Naive thymus-derived CD8-positive, alpha-beta T cell (primary cell): ENCODE measurements at regions of chr7 and their contacts with region 1.

Region 1: DNA sequence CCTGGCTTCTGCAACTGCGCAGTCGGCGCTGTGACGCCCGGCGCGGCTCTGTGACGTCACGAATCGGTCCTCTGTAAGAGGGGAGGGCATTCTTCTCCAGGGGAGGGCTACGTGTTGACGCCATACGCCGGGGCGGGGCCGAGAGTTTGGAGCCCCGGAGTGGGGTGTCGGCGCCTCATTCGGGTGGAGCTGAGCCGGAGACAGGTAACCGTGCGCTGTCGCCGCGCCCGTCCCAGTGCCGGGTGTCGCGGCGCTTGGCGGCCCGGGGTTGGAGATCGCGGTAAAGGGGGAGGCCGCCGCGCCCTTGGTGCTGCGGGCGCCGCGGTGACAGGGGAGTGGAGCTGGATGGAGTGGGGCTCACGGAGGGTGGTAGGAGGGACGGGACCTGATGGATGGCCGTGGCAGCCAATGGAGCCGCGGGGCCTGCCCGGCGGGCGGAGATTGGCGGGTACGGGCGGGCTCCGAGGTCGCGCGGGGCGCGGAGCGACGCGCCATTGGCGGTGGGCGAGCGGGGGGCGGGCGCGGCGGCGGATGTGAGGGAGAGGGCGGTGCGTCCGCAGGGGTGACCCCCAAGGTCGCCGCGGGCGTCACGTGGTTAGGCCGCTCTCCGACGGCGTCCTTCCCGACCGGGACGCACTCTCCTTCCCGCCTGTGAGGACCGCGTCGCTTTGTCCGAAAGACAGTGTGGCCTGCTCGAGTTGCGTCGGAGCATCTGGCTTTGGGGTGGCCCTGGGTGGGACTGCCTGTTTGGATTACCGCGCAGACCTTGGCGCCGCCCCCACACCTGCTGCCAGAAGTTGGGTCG is at the start of gene OGDH:
- DNase-seq: peak; percentile 97 to 100 (median 99)
- ATAC-seq: peak; percentile 94 to 95
- H3K4me3 Mint-ChIP-seq: peak within 1 kb of the TSS; percentile 92 to 100 (median 98)
- H3K27ac Mint-ChIP-seq: peak within 1 kb of the TSS; percentile 96 to 100 (median 99)
- H3K4me1 Mint-ChIP-seq: peaks cover 11 to 52% (median 41%) of the 10 kb centered on the region in 4 donors
- H3K27me3 Mint-ChIP-seq: peaks cover 0 to 5% (median 0%) of the 10 kb centered on the region in 5 donors
- polyA plus RNA-seq, gene OGDH: 23.9 to 30.6 (median 25.6) TPM

Region 2: DNA sequence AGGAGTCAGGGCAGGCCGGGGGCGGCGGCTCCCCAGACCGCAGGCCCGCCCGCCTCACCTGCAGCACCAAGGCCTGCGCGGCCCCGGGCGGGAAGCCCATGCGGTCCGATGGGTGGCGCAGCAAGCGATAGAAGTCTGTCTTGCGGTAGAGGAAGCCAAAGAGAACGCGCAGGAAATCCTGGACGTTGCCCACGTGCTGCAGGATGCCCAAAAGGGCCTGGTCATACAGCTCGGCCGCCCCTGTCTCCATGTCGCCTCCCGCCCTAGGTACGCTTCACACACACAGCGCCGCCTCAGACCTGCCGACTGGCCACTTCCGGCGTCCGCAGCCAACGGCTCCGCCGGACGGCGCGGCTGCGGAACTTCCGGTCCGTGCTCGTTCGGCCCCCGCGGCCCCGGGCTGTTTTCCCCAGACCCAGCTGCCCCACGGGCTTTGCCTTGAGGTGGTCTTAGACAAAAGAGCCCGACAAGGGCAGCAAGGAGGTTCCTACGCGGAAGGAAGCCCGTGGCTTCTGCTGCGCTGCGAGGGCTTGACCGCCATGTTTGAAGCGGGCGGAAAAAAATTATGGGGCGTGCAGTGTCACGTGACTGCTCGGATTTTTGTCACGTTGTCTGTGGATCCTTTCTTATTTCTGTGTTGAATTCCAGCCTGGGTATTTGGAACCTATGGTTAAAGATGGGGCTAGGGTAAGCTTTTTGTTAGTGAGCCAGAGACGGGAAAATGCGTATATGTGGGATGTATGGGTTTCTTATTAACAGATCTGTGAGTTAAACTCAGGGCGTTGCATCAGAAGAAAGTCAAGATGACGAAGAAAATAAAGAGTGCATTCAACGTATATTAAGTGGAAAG is 116.1 kb before region 1 on chr7 and contains the start of gene NUDCD3:
- POLR2A ChIA-PET with region 1: interaction called, 12 read pairs
- DNase-seq: peak; percentile 57 to 89 (median 82)
- ATAC-seq: peak; percentile 80 to 81
- H3K4me3 Mint-ChIP-seq: peak within 1 kb of the TSS; percentile 83 to 99 (median 94)
- H3K27ac Mint-ChIP-seq: peak within 1 kb of the TSS; percentile 89 to 100 (median 97)
- H3K4me1 Mint-ChIP-seq: peaks cover 30 to 51% (median 48%) of the 10 kb centered on the region in 4 donors
- H3K27me3 Mint-ChIP-seq: peaks cover 0 to 5% (median 2%) of the 10 kb centered on the region in 5 donors
- polyA plus RNA-seq, gene NUDCD3: 54.6 to 69.4 (median 59.6) TPM

Region 3: GRCh38 chr7:44581879-44582603 is 24.6 kb before region 1 on chr7 and contains the start of gene TMED4:
- POLR2A ChIA-PET with region 1: interaction called, 45 read pairs
- DNase-seq: peak; percentile 99 to 100 (median 100)
- ATAC-seq: peak; percentile 84 to 85
- H3K4me3 Mint-ChIP-seq: peak within 1 kb of the TSS; percentile 87 to 93 (median 91)
- H3K27ac Mint-ChIP-seq: peak within 1 kb of the TSS; percentile 91 to 99 (median 98)
- H3K4me1 Mint-ChIP-seq: peaks cover 14 to 37% (median 35%) of the 10 kb centered on the region in 4 donors
- H3K27me3 Mint-ChIP-seq: peaks cover 0 to 3% (median 0%) of the 10 kb centered on the region in 5 donors
- polyA plus RNA-seq, gene TMED4: 61.4 to 80.4 (median 71.8) TPM

Region 4: GRCh38 chr7:44638611-44639557 is 32.2 kb after region 1 on chr7:
- POLR2A ChIA-PET with region 1: interaction called, 47 read pairs
- DNase-seq: peak; percentile 32 to 87 (median 51)
- ATAC-seq: peak; percentile 59 to 64
- H3K4me3 Mint-ChIP-seq: peak overlapping the region; percentile 51 to 94 (median 83)
- H3K27ac Mint-ChIP-seq: peak overlapping the region; percentile 96 to 99 (median 98)
- H3K4me1 Mint-ChIP-seq: peaks cover 29 to 87% (median 68%) of the 10 kb centered on the region in 4 donors
- H3K27me3 Mint-ChIP-seq: no peaks in the 10 kb centered on the region

Region 5: DNA sequence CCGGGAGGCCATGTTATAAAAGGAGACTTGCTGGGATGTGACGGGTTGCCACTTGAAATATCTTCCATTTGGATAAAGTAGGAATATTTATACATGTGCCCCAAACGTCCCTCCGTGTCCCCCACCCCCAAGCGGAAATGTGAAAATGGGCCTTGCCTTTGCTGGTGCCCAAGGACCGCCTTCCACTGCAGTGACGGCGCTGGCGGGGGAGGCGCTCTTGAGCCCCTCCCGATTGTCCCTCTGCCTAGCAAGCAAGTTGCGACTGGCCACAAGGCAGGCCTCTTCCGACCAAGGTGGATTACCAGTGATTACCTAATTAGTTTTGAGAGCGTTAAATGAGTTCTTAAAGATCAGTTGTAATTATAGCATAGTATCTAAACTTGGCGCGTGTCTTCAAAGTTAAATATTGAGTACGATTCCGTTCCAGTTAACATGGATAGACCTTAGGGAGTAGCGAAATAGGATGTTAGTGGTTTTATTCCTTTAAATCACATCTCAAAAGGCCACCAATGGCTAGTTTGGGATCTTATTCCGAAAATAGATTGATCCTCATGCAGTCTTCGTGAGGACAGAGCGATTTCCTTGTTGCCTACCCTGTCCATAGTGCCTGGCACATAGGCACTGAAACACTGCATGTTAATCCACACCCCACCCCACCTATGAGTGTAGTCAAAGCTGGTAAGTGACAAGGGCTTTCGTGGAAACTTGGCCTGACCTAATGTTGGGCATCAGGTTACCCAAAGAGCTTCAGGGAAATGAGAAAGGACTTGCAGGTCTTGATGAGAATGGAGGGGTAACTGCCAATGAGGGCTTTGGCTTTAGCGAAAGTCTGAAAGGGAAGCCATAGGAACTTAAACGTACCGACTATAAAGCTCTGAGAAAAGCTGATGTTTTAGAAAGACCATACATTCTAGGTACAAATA is 190.9 kb after region 1 on chr7:
- POLR2A ChIA-PET with region 1: interaction called, 14 read pairs
- DNase-seq: peak; percentile 70 to 92 (median 80)
- ATAC-seq: peak; percentile 48 to 59
- H3K4me3 Mint-ChIP-seq: peak overlapping the region; percentile 87 to 100 (median 95)
- H3K27ac Mint-ChIP-seq: peak overlapping the region; percentile 90 to 99 (median 98)
- H3K4me1 Mint-ChIP-seq: peaks cover 15 to 47% (median 45%) of the 10 kb centered on the region in 4 donors
- H3K27me3 Mint-ChIP-seq: no peaks in the 10 kb centered on the region

Region 6: GRCh38 chr7:45089341-45089891 is 482.8 kb after region 1 on chr7:
- POLR2A ChIA-PET with region 1: no interaction called
- DNase-seq: peak; percentile 53 to 86 (median 70)
- ATAC-seq: peak; percentile 65 to 76
- H3K4me3 Mint-ChIP-seq: peak overlapping the region; percentile 73 to 89 (median 81)
- H3K27ac Mint-ChIP-seq: peak overlapping the region in 9 of 10 donors; percentile 35 to 91 (median 71)
- H3K4me1 Mint-ChIP-seq: peaks cover 3 to 10% (median 8%) of the 10 kb centered on the region in 4 donors
- H3K27me3 Mint-ChIP-seq: peaks cover 0 to 6% (median 0%) of the 10 kb centered on the region in 5 donors